ENCODE measurements at regions of chr3 and their contacts with region 1.

Region 1: GRCh38 chr3:129383292-129383860 is 45.1 kb downstream of the EFCAB12 start:
- DNase-seq: no peak
- ATAC-seq: peak; percentile 99
- H3K4me3 ChIP-seq: no peak overlapping the region
- H3K27ac ChIP-seq: no peak overlapping the region
- H3K4me1 ChIP-seq: no peaks in the 10 kb centered on the region
- H3K27me3 ChIP-seq: no peaks in the 10 kb centered on the region
- CTCF ChIP-seq: peak; percentile 85 to 89 (median 86)
- EP300 ChIP-seq: no peak
- POLR2A ChIP-seq: no peak
- RAD21 ChIP-seq: peak; percentile 85

Region 2: DNA sequence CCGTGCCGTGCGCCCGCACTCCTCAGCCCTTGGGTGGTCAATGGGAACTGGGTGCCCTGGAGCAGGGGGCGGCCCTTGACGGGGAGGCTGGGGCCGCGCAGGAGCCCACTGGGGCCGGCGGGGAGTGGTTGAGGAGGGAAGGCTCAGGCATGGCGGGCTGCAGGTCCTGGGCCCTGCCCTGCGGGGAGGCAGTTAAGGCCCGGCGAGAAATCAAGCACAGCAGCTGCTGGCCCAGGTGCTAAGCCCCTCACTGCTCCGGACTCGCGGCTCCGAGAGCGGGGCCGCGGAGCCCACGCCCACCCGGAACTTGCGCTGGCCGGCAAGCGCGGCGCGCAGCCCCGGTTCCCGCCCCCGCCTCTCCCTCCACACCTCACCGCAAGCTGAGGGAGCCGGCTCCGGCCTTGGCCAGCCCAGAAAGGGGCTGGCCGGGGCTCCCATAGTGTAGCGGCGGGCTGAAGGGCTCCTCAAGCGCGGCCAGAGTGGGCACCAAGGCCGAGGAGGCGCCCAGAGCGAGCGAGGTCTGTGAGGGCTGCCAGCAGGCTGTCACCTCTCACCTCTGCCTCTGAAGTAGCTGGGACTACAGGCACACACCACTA is 315.0 kb before region 1 on chr3:
- CTCF ChIA-PET with region 1: no interaction called
- POLR2A ChIA-PET with region 1: no interaction called
- RAD21 ChIA-PET with region 1: no interaction called
- SMC1A ChIA-PET with region 1: no interaction called
- in situ Hi-C with region 1: no loop called
- intact Hi-C with region 1: no loop called
- DNase-seq: no peak
- ATAC-seq: peak; percentile 20
- H3K4me3 ChIP-seq: no peak overlapping the region
- H3K27ac ChIP-seq: no peak overlapping the region
- H3K4me1 ChIP-seq: no peaks in the 10 kb centered on the region
- H3K27me3 ChIP-seq: no peaks in the 10 kb centered on the region; a peak in 3 of 4 replicates
- CTCF ChIP-seq: no peak
- EP300 ChIP-seq: no peak
- POLR2A ChIP-seq: no peak
- RAD21 ChIP-seq: no peak

Region 3: GRCh38 chr3:129404610-129405009 is 21.2 kb after region 1 on chr3:
- CTCF ChIA-PET with region 1: interaction called, 16 read pairs
- POLR2A ChIA-PET with region 1: no interaction called
- RAD21 ChIA-PET with region 1: interaction called, 7 read pairs
- SMC1A ChIA-PET with region 1: interaction called, 6 read pairs
- in situ Hi-C with region 1: no loop called
- intact Hi-C with region 1: no loop called
- DNase-seq: no peak
- ATAC-seq: peak; percentile 70
- H3K4me3 ChIP-seq: no peak overlapping the region
- H3K27ac ChIP-seq: no peak overlapping the region
- H3K4me1 ChIP-seq: peaks cover 2% of the 10 kb centered on the region; the same call in 1 of the 2 replicates
- H3K27me3 ChIP-seq: no peaks in the 10 kb centered on the region; a peak in 1 of 4 replicates
- CTCF ChIP-seq: no peak
- EP300 ChIP-seq: no peak
- POLR2A ChIP-seq: no peak
- RAD21 ChIP-seq: no peak

Region 4: GRCh38 chr3:129413687-129414506 is 30.5 kb after region 1 on chr3:
- CTCF ChIA-PET with region 1: interaction called, 16 read pairs
- POLR2A ChIA-PET with region 1: no interaction called
- RAD21 ChIA-PET with region 1: interaction called, 14 read pairs
- SMC1A ChIA-PET with region 1: interaction called, 13 read pairs
- in situ Hi-C with region 1: no loop called
- intact Hi-C with region 1: no loop called
- DNase-seq: no peak
- ATAC-seq: peak; percentile 96
- H3K4me3 ChIP-seq: no peak overlapping the region
- H3K27ac ChIP-seq: no peak overlapping the region
- H3K4me1 ChIP-seq: peaks cover 6% of the 10 kb centered on the region
- H3K27me3 ChIP-seq: no peaks in the 10 kb centered on the region
- CTCF ChIP-seq: no peak
- EP300 ChIP-seq: peak; percentile 79 to 82; a peak in 2 of 4 replicates
- POLR2A ChIP-seq: no peak
- RAD21 ChIP-seq: no peak

Region 5: GRCh38 chr3:129428376-129429079 is 45.2 kb after region 1 on chr3 and contains the start of gene EFCAB12:
- CTCF ChIA-PET with region 1: interaction called, 13 read pairs
- POLR2A ChIA-PET with region 1: interaction called, 3 read pairs
- RAD21 ChIA-PET with region 1: interaction called, 78 read pairs
- SMC1A ChIA-PET with region 1: interaction called, 72 read pairs
- in situ Hi-C with region 1: no loop called
- intact Hi-C with region 1: no loop called
- DNase-seq: no peak
- ATAC-seq: peak; percentile 86
- H3K4me3 ChIP-seq: peak within 1 kb of the TSS; percentile 50; the same call in 1 of the 2 replicates
- H3K27ac ChIP-seq: no peak within 1 kb of the TSS; the same call in 1 of the 2 replicates
- H3K4me1 ChIP-seq: peaks cover 26% of the 10 kb centered on the region
- H3K27me3 ChIP-seq: no peaks in the 10 kb centered on the region
- CTCF ChIP-seq: no peak
- EP300 ChIP-seq: no peak
- POLR2A ChIP-seq: peak; percentile 78
- RAD21 ChIP-seq: no peak
- polyA plus RNA-seq, gene EFCAB12: 0.02 to 0.03 TPM

Region 6: GRCh38 chr3:129627429-129628168 is 244.2 kb after region 1 on chr3:
- CTCF ChIA-PET with region 1: interaction called, 6 read pairs
- POLR2A ChIA-PET with region 1: no interaction called
- RAD21 ChIA-PET with region 1: interaction called, 4 read pairs
- SMC1A ChIA-PET with region 1: no interaction called
- in situ Hi-C with region 1: no loop called
- intact Hi-C with region 1: loop called (anchors 10 kb)
- DNase-seq: peak; percentile 45
- ATAC-seq: peak; percentile 68
- H3K4me3 ChIP-seq: peak overlapping the region; percentile 84
- H3K27ac ChIP-seq: peak overlapping the region; percentile 65
- H3K4me1 ChIP-seq: no peaks in the 10 kb centered on the region; the same call in 1 of the 2 replicates
- H3K27me3 ChIP-seq: no peaks in the 10 kb centered on the region; a peak in 1 of 4 replicates
- CTCF ChIP-seq: peak; percentile 85 to 92 (median 90)
- EP300 ChIP-seq: no peak
- POLR2A ChIP-seq: no peak
- RAD21 ChIP-seq: peak; percentile 90